Activated CD4-positive, alpha-beta memory T cell treated with anti-CD3 and anti-CD28 coated beads, Interleukin-2, amount 10 ng/mL, durations not matched to agents 7 days and 5 days (primary cell): ENCODE measurements at regions of chr14 and their contacts with region 1.

Region 1: DNA sequence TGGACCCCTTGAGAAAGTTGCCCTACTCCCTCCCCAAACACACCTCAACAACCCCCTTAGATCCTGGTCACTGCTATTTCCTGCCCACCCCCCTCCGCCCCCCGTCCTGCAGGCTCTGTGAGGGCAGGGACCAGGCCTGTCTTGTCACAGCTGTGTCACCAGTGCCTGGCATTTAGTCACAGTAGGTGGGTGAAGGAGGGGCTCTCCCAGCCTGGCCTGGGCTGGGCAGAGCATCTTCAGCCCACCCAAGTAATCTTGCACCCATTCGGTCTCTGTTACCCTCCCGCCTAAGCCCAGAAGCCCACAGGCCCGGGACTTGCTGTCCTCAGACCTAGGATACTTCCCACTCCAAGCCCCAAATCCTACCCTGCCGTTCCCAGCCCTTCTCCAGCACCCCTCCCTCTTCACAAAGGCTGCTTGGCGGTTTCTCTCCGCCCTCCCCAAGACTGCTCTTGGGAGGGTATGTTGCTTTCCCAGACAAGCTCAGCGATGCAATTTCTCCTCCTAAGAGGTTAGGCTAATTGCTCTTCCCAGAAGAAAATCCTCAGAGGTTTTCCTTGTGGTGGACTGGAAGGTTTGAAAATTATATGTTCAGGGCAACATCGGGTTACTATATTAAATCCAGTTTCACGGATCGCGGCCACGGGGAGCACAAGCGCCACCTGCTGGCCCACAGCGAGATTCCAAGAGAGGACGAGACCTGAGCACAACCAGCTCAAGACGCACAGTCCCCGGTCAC is 50.8 kb upstream of the ZFP36L1 start:
- DNase-seq: peak; percentile 76
- H3K4me3 Mint-ChIP-seq: no peak overlapping the region
- H3K27ac Mint-ChIP-seq: no peak overlapping the region
- H3K4me1 Mint-ChIP-seq: peaks cover 20% of the 10 kb centered on the region
- H3K27me3 Mint-ChIP-seq: peaks cover 13% of the 10 kb centered on the region

Region 2: DNA sequence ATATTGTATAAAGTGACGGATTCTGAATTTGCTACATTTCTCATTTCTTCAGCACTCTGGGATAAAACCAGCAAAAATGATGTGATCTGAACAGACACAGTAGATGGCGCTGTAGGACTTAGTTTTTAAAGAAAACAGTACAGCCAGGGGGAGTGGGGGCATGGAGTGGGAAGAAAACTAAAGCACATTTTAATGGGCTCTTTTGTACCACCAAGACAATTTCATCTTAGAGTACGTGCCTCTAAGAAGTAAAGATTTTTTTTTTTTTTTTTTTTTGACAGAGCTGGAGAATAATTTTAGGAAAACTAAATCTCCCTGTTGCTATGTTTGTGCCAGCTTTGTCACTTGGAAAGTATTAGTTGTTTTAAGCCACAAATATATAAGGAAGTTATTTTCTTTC is 899.7 kb before region 1 on chr14:
- CTCF ChIA-PET with region 1: interaction called, 25 read pairs
- POLR2A ChIA-PET with region 1: no interaction called
- DNase-seq: peak; percentile 30
- H3K4me3 Mint-ChIP-seq: no peak overlapping the region
- H3K27ac Mint-ChIP-seq: no peak overlapping the region
- H3K4me1 Mint-ChIP-seq: no peaks in the 10 kb centered on the region
- H3K27me3 Mint-ChIP-seq: peaks cover 2% of the 10 kb centered on the region

Region 3: DNA sequence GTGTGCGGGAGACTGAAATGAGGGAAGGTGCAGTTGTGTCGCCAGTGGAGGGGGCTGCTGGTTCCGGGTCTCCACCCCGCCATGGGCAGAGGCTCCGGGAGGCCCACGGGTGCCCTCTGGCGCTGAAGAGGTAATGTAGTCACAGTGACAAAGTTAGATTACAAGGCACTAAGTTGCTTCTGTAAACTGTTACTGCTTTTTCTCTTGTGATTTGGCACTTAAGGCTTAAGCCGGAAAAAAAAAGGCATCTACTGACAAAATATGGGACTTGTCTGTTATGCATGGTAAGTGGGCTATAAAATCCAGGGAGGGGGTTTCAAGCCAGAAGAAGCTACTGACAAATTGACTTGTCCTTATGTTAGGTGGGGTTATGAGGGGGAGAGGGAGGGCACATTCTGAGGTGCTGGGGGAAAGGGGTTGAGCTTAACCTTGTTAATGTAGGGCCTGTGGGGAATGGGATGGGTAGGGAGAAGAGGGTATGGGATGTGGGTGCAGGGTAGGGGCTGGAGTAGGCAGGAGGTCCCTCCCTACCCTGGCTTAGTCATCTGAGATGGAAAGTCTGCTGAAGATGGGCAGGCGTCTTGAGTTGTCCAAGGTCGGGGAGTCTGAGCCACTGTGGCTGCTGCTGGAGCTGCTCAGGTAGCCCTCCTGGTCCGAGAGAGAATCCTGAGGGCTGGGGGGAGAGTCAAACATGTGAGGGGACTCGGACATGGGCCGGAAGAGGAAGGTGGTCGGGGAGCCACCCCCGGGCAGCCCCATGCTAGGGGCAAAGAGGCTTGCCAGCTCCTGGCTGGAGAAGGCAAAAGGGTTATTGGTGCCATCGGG is 54.4 kb before region 1 on chr14:
- CTCF ChIA-PET with region 1: interaction called, 13 read pairs
- POLR2A ChIA-PET with region 1: no interaction called
- DNase-seq: peak; percentile 91
- H3K4me3 Mint-ChIP-seq: peak overlapping the region; percentile 92
- H3K27ac Mint-ChIP-seq: peak overlapping the region; percentile 100
- H3K4me1 Mint-ChIP-seq: peaks cover 57% of the 10 kb centered on the region
- H3K27me3 Mint-ChIP-seq: no peaks in the 10 kb centered on the region

Region 4: DNA sequence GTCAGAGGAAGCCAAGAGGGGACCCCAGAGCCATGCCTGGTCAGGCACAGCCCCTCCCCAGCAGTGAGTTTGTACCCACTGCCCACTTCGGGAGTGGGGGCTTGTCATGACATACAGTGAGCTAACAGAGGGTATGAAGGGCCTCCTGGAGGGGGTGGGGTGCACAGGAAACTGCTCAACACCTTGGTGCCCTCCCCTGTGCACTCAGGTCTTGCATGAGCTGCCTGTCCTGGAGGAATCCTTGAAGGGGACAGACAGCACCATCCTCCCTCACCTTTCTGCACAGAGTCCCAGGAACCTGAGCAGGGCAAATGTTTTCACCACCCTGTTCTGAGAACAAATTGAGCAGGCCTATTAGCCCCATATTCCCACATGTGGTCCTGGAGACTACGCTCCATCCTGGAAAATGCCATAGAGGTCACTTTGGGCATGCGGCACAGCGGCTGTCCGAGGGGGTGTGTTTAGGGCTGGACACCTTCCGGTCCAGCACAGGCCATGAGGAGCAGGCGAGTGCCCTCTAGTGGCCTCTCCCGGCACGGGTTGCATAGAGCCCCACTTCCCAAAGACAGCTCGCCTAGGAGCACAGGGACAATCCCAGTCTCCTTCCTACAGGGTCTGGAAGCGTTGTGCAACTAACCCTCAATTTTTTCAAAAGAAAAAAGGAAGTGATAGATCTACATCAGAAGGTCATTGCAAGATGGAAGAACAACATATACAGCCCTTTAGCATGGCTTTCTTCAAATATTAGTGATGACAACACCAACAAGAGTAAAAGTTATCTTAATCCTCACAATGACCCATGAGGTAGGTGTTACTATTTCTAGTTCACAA is 18.9 kb before region 1 on chr14:
- CTCF ChIA-PET with region 1: interaction called, 27 read pairs
- POLR2A ChIA-PET with region 1: interaction called, 3 read pairs
- DNase-seq: peak; percentile 54
- H3K4me3 Mint-ChIP-seq: no peak overlapping the region
- H3K27ac Mint-ChIP-seq: no peak overlapping the region
- H3K4me1 Mint-ChIP-seq: peaks cover 28% of the 10 kb centered on the region
- H3K27me3 Mint-ChIP-seq: peaks cover 2% of the 10 kb centered on the region